ENCODE measurements at regions of chr1 and their contacts with region 1.

Region 1: DNA sequence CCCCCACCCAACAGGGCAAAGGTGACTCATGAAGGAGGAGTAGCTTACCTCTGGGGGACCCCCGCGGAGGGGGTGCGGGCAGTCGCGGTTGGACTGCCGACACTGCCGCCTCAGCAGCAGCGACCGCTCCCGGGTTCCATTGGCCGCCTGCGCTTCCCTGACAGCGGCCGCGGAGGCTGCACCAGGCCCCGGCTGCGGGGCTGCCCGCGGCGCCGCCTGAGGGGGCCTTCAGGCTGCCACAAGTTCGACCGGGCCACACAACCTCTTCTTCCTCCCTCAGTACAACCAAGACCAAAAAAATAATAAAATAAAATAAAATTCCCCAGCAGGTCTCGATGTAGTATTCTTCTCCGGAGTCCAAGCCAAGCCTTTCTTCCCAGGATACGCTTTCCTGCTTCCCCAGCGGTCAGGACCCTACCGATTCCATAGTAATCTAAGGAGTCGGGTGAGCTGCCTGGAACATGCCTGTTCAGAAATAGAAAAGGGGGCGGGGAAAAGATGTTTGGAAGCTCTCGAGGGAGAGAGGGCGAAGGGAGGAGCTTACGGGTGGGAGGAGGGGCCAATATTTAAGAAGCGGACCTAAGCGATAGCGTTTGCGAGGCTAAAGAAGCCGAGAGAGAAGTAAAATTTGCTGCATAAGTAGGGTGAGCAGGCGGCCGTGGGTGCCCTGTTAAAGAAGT is at the start of gene PI4KB:
- DNase-seq: peak; percentile 76 to 98 (median 87)
- ATAC-seq: peak; percentile 93
- H3K4me3 ChIP-seq: peak within 1 kb of the TSS; percentile 67 to 86
- H3K4me3 Mint-ChIP-seq: peak within 1 kb of the TSS; percentile 88
- H3K27ac ChIP-seq: peak within 1 kb of the TSS; percentile 75 to 98
- H3K27ac Mint-ChIP-seq: peak within 1 kb of the TSS; percentile 93
- H3K4me1 ChIP-seq: peaks cover 15% of the 10 kb centered on the region
- H3K4me1 Mint-ChIP-seq: peaks cover 47% of the 10 kb centered on the region
- H3K27me3 ChIP-seq: no peaks in the 10 kb centered on the region
- H3K27me3 Mint-ChIP-seq: no peaks in the 10 kb centered on the region
- CTCF ChIP-seq: no peak
- total RNA-seq, gene PI4KB: 63.1 to 63.2 TPM

Region 2: GRCh38 chr1:151311589-151312331 is 15.6 kb before region 1 on chr1:
- CTCF ChIA-PET with region 1: interaction called, 4 read pairs
- POLR2A ChIA-PET with region 1: interaction called, 6 read pairs
- intact Hi-C with region 1: loop called in 1 of 2 experiments (anchors 2 kb)
- DNase-seq: peak in 7 of 9 experiments; percentile 45 to 75 (median 62)
- ATAC-seq: peak; percentile 98
- H3K4me3 ChIP-seq: no peak overlapping the region
- H3K4me3 Mint-ChIP-seq: no peak overlapping the region
- H3K27ac ChIP-seq: peak overlapping the region in 1 of 2 experiments; percentile 19
- H3K27ac Mint-ChIP-seq: peak overlapping the region; percentile 79
- H3K4me1 ChIP-seq: peaks cover 17% of the 10 kb centered on the region
- H3K4me1 Mint-ChIP-seq: peaks cover 49% of the 10 kb centered on the region
- H3K27me3 ChIP-seq: no peaks in the 10 kb centered on the region
- H3K27me3 Mint-ChIP-seq: no peaks in the 10 kb centered on the region
- CTCF ChIP-seq: no peak

Region 3: DNA sequence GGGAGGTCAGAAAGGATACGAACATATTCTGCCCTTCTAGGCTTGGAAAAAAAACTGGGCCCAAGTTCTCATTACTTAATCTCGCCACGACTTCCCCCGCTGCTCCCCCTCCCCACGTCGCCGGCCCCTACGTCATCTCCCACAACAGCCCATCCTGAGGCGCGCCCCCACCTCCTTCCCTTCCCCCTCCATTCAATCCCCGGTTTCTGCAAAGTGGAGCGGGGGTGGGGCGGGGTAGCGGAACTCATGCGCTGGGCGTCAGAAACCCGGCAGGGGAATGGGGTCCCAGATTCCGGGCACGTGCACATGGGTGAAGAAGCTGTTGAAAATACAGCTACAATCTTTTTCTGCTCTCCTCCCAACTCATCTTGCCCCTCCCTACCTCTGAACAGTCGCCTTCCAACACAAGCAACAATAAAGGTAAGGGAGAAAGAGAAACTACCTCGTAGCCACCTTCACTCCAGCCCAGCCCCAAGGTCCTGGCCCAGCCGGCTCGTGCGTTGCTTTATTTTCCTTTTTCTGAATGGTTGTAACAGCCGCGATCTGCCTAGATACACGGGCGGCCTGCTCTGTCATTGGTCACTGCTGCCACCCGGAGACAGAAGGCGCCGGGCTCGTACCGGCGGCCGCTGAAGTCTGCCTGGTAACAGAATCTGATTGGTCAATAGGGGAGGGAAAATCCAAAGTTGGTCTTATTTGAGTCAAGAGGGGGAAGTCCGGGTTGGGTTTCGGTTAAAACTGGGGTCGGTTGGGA is 19.6 kb after region 1 on chr1 and contains the start of gene RFX5:
- CTCF ChIA-PET with region 1: interaction called, 19 read pairs
- POLR2A ChIA-PET with region 1: interaction called, 8 read pairs
- intact Hi-C with region 1: loop called (anchors 1 kb)
- DNase-seq: peak; percentile 85 to 99 (median 93)
- ATAC-seq: peak; percentile 92
- H3K4me3 ChIP-seq: peak within 1 kb of the TSS; percentile 75 to 83
- H3K4me3 Mint-ChIP-seq: peak within 1 kb of the TSS; percentile 95
- H3K27ac ChIP-seq: peak within 1 kb of the TSS; percentile 89 to 98
- H3K27ac Mint-ChIP-seq: peak within 1 kb of the TSS; percentile 99
- H3K4me1 ChIP-seq: peaks cover 15% of the 10 kb centered on the region
- H3K4me1 Mint-ChIP-seq: peaks cover 38% of the 10 kb centered on the region
- H3K27me3 ChIP-seq: no peaks in the 10 kb centered on the region
- H3K27me3 Mint-ChIP-seq: no peaks in the 10 kb centered on the region
- CTCF ChIP-seq: no peak
- total RNA-seq, gene RFX5: 62.6 to 65.9 TPM

Region 4: DNA sequence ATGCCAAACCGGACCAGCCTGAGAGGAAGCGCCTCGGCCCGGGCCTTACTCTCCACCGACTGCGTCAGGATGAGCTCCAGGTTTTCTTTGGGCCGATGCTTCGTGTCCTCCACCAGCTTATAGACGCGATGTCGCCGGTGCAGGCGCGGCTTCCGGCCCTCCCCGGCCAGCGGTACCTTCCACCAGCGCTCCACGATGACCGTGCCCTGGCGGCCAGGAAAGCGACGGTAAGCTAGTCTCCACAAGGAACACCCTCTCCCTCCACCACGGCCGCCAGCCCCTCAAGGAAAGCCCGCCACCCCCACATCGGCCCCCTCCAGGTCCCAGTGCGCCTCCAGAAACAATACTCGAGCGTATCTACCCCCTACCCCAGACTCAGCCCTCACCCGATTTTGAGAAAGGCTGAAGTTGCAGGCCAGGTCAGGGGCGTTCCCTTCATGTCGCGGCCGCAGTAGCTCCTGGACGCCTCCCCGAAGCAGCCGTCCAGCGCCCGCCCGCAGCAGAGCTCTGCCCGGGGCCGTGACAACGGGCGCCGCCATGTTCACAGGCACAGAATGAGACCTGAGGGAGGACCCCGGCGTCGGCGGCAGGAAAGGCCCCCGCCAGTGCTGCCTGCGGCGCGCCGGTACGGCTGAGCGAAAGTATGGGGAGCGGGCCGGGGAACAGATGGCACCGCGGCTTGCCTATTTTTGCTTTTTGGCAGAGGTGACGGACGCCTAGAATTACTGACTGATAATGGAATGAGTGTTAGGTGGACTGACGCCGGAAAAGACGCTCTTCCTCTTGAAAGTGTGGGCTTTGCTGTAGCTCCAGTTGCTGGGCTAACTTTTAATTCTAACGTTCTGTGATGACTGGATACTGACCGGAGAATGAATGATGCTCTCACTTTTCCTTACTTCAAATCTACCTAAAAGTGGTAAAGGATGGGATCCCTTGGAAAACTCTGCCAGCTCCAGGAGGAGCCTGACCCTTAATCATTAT is 435.9 kb after region 1 on chr1 and contains the start of gene MRPL9:
- CTCF ChIA-PET with region 1: no interaction called
- POLR2A ChIA-PET with region 1: no interaction called
- intact Hi-C with region 1: loop called in 1 of 2 experiments (anchors 1 kb)
- DNase-seq: peak; percentile 75 to 89 (median 83)
- ATAC-seq: peak; percentile 99
- H3K4me3 ChIP-seq: peak within 1 kb of the TSS; percentile 78 to 88
- H3K4me3 Mint-ChIP-seq: peak within 1 kb of the TSS; percentile 90
- H3K27ac ChIP-seq: peak within 1 kb of the TSS; percentile 72 to 92
- H3K27ac Mint-ChIP-seq: peak within 1 kb of the TSS; percentile 96
- H3K4me1 ChIP-seq: peaks cover 12% of the 10 kb centered on the region
- H3K4me1 Mint-ChIP-seq: peaks cover 20% of the 10 kb centered on the region
- H3K27me3 ChIP-seq: no peaks in the 10 kb centered on the region
- H3K27me3 Mint-ChIP-seq: no peaks in the 10 kb centered on the region
- CTCF ChIP-seq: no peak
- total RNA-seq, gene MRPL9: 176 to 186 TPM

Region 5: DNA sequence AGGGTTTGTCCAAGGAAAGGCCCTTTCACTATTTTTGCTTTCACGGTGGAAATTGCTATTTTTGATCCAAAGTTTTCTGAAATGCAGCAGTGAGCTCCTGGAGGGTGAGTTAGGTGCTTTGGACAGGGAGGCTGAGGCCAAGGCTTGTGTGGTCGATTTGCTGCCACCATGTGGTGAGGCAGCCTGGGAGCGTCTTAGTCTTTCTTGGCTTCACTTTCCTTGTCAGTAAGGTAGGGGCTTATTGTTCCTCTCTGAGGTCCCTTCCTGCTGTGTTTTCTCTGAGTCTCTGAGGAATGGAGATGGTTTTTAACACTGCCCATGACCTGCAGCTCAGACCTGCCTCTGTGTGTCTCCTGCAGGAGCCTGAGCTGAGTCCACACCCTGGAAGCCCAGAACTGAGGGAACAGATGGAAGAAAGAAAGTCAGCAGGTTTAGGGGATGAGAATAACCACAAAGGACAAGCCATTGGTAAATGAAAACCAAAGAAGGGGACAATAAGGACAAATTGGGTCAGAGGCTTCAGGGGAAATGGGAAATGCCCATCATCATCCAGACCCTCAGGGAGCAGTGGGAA is 686.4 kb after region 1 on chr1:
- CTCF ChIA-PET with region 1: no interaction called
- POLR2A ChIA-PET with region 1: no interaction called
- intact Hi-C with region 1: no loop called
- DNase-seq: peak in 5 of 9 experiments; percentile 33 to 55 (median 51)
- ATAC-seq: no peak
- H3K4me3 ChIP-seq: no peak overlapping the region
- H3K4me3 Mint-ChIP-seq: no peak overlapping the region
- H3K27ac ChIP-seq: no peak overlapping the region
- H3K27ac Mint-ChIP-seq: no peak overlapping the region
- H3K4me1 ChIP-seq: no peaks in the 10 kb centered on the region
- H3K4me1 Mint-ChIP-seq: no peaks in the 10 kb centered on the region
- H3K27me3 ChIP-seq: no peaks in the 10 kb centered on the region
- H3K27me3 Mint-ChIP-seq: peaks cover 9% of the 10 kb centered on the region
- CTCF ChIP-seq: no peak